Heart left ventricle (tissue), 16 donors: ENCODE measurements at regions of chr4 and their contacts with region 1.

Region 1: DNA sequence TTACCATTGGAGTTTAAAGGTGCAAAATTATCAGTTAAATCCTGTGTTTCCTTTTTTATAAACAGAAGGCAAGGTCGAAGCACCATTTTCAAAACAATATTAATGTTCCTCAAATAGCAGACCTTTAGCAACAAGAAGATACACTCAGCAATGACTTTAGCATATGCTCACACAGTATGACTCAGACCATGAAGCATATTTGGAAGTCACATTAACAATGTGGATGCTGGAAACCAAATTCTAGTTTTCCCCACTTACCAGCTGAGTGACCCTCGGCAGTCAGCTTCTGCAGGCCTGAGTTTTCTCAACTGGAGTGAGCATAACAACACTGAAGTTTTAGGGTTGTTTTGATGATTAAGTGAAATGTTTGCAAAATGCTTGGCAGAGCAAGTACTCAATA is 130.5 kb downstream of the ANK2 start:
- DNase-seq: no peak
- ATAC-seq: peak in 3 of 4 donors; percentile 37 to 54 (median 41)
- H3K4me3 ChIP-seq: no peak overlapping the region
- H3K27ac ChIP-seq: peak overlapping the region in 8 of 12 donors; percentile 1 to 50 (median 13)
- H3K4me1 ChIP-seq: peaks cover 0 to 60% (median 19%) of the 10 kb centered on the region in 12 donors
- H3K27me3 ChIP-seq: no peaks in the 10 kb centered on the region
- CTCF ChIP-seq: no peak
- POLR2A ChIP-seq: no peak

Region 2: DNA sequence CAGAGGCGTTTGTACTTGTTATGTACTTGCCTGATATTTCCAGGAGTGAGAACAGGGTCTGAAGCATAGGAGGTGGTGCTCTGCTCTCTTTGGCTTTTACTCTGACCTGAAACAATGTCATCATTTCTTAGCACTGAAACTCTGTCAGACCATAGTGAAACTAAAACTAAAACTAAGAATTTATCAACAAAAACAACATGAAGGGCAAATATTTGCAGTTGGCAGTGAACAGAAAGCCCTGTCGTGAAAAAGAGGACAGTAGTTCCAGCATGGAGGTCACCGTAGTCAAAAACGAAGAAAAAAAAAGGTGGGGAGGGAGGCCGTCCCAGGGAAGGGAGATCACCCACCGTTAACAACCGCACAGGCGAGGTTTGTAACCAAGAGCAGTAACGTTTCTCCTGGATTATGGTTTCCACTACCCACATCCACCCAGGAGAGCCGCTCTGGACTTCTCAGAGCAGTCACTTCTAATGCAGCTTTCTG is 33.1 kb before region 1 on chr4:
- intact Hi-C with region 1: loop called in 1 of 10 experiments (anchors 5 kb)
- DNase-seq: peak in 1 of 5 donors; percentile 28
- ATAC-seq: peak; percentile 50 to 67 (median 59)
- H3K4me3 ChIP-seq: peak overlapping the region in 10 of 12 donors; percentile 24 to 59 (median 50)
- H3K27ac ChIP-seq: peak overlapping the region; percentile 52 to 92 (median 82)
- H3K4me1 ChIP-seq: peaks cover 0 to 34% (median 7%) of the 10 kb centered on the region in 12 donors
- H3K27me3 ChIP-seq: no peaks in the 10 kb centered on the region
- CTCF ChIP-seq: no peak
- POLR2A ChIP-seq: no peak

Region 3: GRCh38 chr4:113673450-113673849 is 493.5 kb after region 1 on chr4:
- intact Hi-C with region 1: no loop called
- DNase-seq: no peak
- ATAC-seq: peak; percentile 18 to 57 (median 45)
- H3K4me3 ChIP-seq: no peak overlapping the region
- H3K27ac ChIP-seq: peak overlapping the region in 6 of 12 donors; percentile 3 to 21 (median 12)
- H3K4me1 ChIP-seq: peaks cover 8 to 66% (median 48%) of the 10 kb centered on the region in 12 donors
- H3K27me3 ChIP-seq: no peaks in the 10 kb centered on the region
- CTCF ChIP-seq: no peak
- POLR2A ChIP-seq: no peak